ENCODE measurements at regions of chr18 and their contacts with region 1.

Region 1: DNA sequence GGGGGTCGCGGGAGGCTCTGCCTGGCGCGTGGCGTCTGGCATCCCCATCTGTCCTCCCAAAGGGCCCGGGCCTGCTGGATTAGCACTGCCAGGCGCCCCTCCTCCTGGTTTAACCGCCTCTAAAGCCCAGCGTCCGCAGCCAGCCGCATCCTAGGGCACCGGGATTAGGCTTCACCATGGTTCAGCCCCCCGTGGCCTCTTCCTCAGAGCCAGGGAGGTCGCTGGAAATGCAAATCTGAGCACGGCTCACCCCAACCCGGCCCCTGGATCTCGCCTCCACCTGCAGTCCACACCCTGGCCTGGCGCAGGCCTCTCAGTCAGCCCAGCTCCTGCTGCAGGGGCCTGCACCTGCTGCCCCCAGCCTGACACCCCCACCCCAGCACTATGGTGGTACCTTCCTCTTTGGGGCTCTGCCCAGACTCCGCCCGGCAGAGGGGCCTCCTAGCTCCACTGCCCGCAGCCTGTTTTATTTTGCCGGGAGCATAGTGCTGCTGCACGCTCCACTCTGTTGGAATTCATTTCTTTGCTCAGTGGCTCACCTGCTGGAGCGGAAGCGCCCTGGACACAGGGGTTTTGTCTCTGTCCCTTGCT is 13.2 kb downstream of the PRELID3A start:
- DNase-seq: no peak
- H3K4me3 Mint-ChIP-seq: peak overlapping the region; percentile 69
- H3K27ac Mint-ChIP-seq: peak overlapping the region; percentile 6
- H3K4me1 Mint-ChIP-seq: peaks cover 12% of the 10 kb centered on the region
- H3K27me3 Mint-ChIP-seq: no peaks in the 10 kb centered on the region

Region 2: DNA sequence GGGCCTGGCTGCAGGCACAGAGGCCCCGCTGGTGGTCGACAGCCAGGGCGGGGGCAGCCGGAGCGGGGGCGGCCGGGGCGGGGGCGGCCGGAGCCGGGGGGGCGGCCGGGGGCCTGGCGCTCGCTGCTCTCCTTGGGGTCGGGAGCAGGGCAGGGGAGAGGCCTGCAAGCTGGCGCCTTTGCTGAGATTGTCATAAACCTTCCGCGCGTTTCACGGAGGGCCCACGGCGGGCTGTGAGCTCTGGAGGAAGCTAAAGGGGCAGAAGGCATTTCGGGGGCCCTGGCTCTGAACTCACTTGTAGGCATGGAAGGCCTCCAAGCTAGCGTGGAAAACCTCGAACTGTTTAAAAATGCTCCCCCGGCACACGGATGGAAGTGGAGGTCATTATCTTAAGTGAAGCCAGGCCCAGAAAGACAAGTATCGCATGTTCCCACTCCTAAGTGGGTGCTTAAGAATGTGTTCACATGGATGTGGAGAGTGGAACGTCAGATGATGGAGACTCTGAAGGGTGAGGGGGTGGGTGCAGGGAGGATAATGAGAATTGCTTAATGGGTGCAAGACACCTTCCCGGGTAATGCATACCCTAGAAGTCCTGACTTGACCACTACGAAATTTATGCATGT is 12.6 kb before region 1 on chr18:
- CTCF ChIA-PET with region 1: interaction called, 6 read pairs
- POLR2A ChIA-PET with region 1: interaction called, 13 read pairs
- DNase-seq: no peak
- H3K4me3 Mint-ChIP-seq: peak overlapping the region; percentile 43
- H3K27ac Mint-ChIP-seq: no peak overlapping the region
- H3K4me1 Mint-ChIP-seq: peaks cover 40% of the 10 kb centered on the region
- H3K27me3 Mint-ChIP-seq: peaks cover 34% of the 10 kb centered on the region

Measured in activated CD4-positive, alpha-beta memory T cell treated with anti-CD3 and anti-CD28 coated beads, Interleukin-2, amount 10 ng/mL, durations not matched to agents 7 days and 5 days (primary cell).